ENCODE measurements at regions of chr1 and their contacts with region 1.

Region 1: DNA sequence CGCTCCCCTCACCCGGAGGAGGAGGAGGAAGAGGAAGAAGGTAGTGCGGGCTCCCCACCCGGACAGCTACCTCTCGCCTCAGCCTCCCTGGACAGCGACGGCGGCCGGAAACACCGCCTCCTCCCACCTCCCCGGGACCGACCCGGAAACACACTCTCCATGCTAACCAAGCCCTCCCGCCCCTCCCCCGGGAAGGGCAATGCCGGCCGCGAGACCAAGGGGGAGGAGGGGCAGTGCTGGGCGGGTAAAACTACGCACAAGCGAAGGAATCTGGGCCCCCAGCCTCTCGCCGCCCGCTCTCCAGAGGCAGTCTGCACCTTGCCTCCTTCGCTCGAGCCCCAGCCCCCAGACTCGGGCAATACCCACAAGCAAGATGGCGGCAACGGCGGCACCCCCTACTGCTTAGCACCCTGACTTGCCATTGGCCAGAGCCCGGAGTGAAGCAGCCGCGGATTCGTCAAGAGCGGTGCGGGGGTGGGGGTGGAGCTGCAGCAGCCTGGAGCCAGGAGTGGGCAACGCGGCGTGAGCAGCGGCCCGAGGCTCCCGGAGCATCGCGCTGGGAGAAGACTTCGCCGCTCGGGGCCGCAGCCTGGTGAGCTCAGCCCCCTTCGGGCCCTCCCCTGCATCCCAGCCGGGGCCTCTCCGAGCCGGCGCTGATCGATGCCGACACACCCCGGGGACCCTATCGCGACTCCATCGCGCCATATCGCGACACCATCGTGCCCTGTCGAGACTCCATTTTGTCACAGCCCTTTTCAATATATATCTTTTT is at the starts of genes KIAA0319L and NCDN:
- DNase-seq: peak; percentile 93 to 96
- H3K4me3 ChIP-seq: peak within 1 kb of the TSS; percentile 89
- H3K4me3 Mint-ChIP-seq: peak within 1 kb of the TSS; percentile 89
- H3K27ac Mint-ChIP-seq: peak within 1 kb of the TSS; percentile 93
- H3K4me1 ChIP-seq: peaks cover 12% of the 10 kb centered on the region
- H3K4me1 Mint-ChIP-seq: no peaks in the 10 kb centered on the region
- H3K27me3 ChIP-seq: no peaks in the 10 kb centered on the region
- H3K27me3 Mint-ChIP-seq: no peaks in the 10 kb centered on the region
- CTCF ChIP-seq: no peak
- total RNA-seq, gene KIAA0319L: 39.9 and 40.2 TPM in 2 replicates
- total RNA-seq, gene NCDN: 12.8 and 14.1 TPM in 2 replicates

Region 2: DNA sequence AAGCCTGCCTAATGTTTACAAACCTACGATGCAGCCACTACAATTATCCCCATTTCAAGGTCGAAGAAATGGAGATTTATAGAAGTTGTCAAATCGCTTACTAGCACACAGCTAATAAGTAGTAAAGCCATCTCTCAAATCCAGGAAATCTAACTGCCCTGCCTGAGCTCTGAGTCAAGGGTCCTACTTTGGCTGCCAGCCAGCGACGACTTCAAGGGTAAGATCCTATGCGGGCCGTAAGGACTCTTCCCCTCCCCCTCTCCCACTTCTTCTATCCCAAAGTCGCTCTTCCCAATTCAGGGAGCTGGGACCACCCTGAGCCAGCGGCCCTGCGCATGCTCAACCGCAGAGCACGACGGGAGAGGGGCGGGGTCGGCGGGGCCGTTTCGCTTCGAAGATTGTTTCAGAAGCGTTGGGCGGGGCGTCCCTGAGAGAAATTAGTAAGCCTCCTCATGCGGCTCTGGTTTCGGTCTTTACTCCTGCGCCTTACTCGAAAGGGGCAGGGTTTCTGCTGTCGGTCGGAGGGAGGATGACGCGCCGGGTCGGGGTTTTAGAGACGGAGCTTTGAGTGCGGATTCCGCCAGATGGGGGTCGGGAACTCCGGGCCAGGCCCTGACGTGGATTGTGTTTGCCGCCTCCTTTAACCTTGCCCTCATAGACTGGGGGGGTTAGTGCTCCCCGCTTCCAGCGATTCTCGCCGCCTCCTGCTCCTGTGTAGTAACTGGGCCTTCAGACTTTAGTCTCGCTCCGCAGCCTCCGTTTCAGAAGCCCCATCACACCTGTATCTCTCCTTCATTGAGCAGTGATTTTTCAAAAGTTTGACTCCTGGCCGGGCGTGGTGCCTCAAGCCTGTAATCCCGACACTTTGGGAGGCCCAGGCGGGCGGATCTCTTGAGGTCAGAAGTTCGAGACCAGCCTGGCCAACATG is 478.2 kb before region 1 on chr1 and contains the start of gene ZMYM1:
- CTCF ChIA-PET with region 1: no interaction called
- POLR2A ChIA-PET with region 1: no interaction called
- intact Hi-C with region 1: loop called (anchors 10 kb)
- DNase-seq: peak; percentile 82 to 84
- H3K4me3 ChIP-seq: peak within 1 kb of the TSS; percentile 57
- H3K4me3 Mint-ChIP-seq: peak within 1 kb of the TSS; percentile 98
- H3K27ac Mint-ChIP-seq: peak within 1 kb of the TSS; percentile 99
- H3K4me1 ChIP-seq: no peaks in the 10 kb centered on the region
- H3K4me1 Mint-ChIP-seq: no peaks in the 10 kb centered on the region
- H3K27me3 ChIP-seq: no peaks in the 10 kb centered on the region
- H3K27me3 Mint-ChIP-seq: no peaks in the 10 kb centered on the region
- CTCF ChIP-seq: no peak
- total RNA-seq, gene ZMYM1: 14.0 and 15.7 TPM in 2 replicates

Region 3: DNA sequence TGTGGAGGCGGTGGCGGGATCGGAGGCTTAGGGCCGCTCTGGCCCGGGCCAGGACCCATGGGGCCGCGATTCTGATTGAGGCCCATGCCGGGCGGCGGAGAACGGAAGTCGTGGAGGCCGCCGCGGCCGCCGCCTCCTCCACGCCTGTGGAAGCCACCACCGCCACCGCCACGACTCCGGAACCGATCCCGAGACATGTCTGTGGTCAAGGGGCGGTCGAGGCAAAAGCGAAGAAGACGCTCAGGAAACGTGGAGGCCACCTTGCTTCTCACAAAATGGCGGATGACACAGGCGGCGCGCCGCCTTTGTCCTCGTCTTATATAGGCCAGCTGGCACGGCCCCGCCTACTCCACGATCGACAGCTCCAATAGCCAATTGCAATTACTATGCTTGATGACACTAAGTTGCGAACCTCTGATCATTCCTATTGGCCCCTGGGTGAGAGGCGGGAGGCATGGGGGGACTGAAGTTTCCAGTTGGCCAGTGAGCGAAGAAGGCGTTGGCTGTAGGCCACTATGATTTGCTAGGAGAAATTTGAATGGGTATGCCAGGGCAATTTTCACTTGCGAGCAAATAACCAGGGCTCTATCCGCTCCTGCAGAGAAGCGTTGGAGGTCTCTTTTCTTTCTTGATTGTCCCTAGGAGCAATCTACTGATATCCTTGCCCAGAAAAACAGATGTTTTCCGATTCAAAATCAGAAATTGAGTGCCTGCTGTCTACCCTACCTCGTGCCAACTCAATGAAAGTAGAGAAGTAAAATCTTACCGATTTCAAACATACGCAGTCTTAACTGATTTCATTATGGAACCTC is 364.4 kb before region 1 on chr1 and contains the start of gene SFPQ:
- CTCF ChIA-PET with region 1: no interaction called
- POLR2A ChIA-PET with region 1: no interaction called
- intact Hi-C with region 1: loop called (anchors 5 kb)
- DNase-seq: peak; percentile 93 to 96
- H3K4me3 ChIP-seq: peak within 1 kb of the TSS; percentile 52
- H3K4me3 Mint-ChIP-seq: peak within 1 kb of the TSS; percentile 89
- H3K27ac Mint-ChIP-seq: peak within 1 kb of the TSS; percentile 88
- H3K4me1 ChIP-seq: peaks cover 9% of the 10 kb centered on the region
- H3K4me1 Mint-ChIP-seq: peaks cover 19% of the 10 kb centered on the region
- H3K27me3 ChIP-seq: no peaks in the 10 kb centered on the region
- H3K27me3 Mint-ChIP-seq: no peaks in the 10 kb centered on the region
- CTCF ChIP-seq: no peak
- total RNA-seq, gene SFPQ: 274 and 285 TPM in 2 replicates

Region 4: GRCh38 chr1:35947547-35947946 is 390.1 kb after region 1 on chr1:
- CTCF ChIA-PET with region 1: no interaction called
- POLR2A ChIA-PET with region 1: no interaction called
- intact Hi-C with region 1: no loop called
- DNase-seq: no peak
- H3K4me3 ChIP-seq: no peak overlapping the region
- H3K4me3 Mint-ChIP-seq: no peak overlapping the region
- H3K27ac Mint-ChIP-seq: no peak overlapping the region
- H3K4me1 ChIP-seq: no peaks in the 10 kb centered on the region
- H3K4me1 Mint-ChIP-seq: no peaks in the 10 kb centered on the region
- H3K27me3 ChIP-seq: no peaks in the 10 kb centered on the region
- H3K27me3 Mint-ChIP-seq: no peaks in the 10 kb centered on the region
- CTCF ChIP-seq: no peak

Measured in Caco-2 (cell line).